Activated CD4-positive, alpha-beta T cell treated with anti-CD3 and anti-CD28 coated beads, Interleukin-2, amount 10 ng/mL, durations not matched to agents 7 days and 5 days (primary cell): ENCODE measurements at regions of chr9 and their contacts with region 1.

Region 1: GRCh38 chr9:97921959-97922724 is at the start of gene TRMO:
- DNase-seq: peak; percentile 98
- H3K4me3 Mint-ChIP-seq: peak within 1 kb of the TSS; percentile 96
- H3K27ac Mint-ChIP-seq: peak within 1 kb of the TSS; percentile 99
- H3K4me1 Mint-ChIP-seq: peaks cover 60% of the 10 kb centered on the region
- H3K27me3 Mint-ChIP-seq: peaks cover 2% of the 10 kb centered on the region
- total RNA-seq, gene TRMO: 26.6 to 31.8 TPM

Region 2: DNA sequence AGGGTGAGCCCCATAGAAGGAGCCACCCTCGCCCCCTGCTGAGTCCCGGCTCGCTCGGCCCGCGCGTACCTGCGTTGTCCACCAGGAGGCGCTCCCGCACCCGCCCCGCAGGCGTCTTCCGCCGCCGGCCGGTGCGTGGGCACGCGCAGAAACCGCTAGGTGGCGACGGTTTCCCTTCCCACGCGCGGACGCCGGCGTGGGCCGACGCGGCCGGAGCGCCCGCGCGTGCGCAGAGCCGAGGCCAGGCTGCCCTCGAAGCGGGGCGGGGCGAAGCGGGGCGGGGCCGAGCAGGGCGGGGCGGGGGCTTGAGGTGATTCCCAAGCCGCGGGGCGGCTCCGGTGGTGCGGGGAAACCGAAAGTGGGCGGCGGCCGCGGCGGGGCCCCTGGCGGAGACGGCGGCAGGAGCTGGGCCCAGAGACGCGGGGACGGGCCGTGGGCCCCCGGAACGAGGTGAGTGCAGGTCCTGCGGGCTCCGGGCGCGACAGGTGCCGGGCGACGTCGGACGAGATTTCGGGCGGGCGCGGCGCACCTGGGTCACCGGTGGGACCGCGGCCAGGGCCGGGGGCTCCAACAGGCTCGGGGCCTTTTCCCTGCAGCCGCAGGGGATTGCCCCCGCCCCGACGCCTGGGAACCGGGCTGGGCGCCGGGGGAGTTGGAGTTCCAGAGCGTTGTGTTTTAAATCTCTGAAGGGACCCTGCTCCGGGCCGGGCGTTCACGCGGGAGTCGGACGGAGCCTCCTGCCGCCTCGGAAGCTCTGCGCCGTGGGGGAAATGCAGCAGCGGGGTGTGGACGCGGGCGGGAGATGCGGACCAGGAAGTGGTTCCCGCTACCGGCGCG is 510.1 kb before region 1 on chr9 and contains the start of gene TDRD7:
- CTCF ChIA-PET with region 1: no interaction called
- POLR2A ChIA-PET with region 1: no interaction called
- DNase-seq: peak; percentile 87
- H3K4me3 Mint-ChIP-seq: peak within 1 kb of the TSS; percentile 85
- H3K27ac Mint-ChIP-seq: peak within 1 kb of the TSS; percentile 52
- H3K4me1 Mint-ChIP-seq: peaks cover 34% of the 10 kb centered on the region
- H3K27me3 Mint-ChIP-seq: peaks cover 35% of the 10 kb centered on the region
- total RNA-seq, gene TDRD7: 18.1 to 19.5 TPM

Region 3: GRCh38 chr9:97890038-97890437 is 32.1 kb before region 1 on chr9:
- CTCF ChIA-PET with region 1: interaction called, 11 read pairs
- POLR2A ChIA-PET with region 1: no interaction called
- DNase-seq: peak; percentile 75
- H3K4me3 Mint-ChIP-seq: no peak overlapping the region
- H3K27ac Mint-ChIP-seq: peak overlapping the region; percentile 79
- H3K4me1 Mint-ChIP-seq: peaks cover 9% of the 10 kb centered on the region
- H3K27me3 Mint-ChIP-seq: peaks cover 3% of the 10 kb centered on the region

Region 4: DNA sequence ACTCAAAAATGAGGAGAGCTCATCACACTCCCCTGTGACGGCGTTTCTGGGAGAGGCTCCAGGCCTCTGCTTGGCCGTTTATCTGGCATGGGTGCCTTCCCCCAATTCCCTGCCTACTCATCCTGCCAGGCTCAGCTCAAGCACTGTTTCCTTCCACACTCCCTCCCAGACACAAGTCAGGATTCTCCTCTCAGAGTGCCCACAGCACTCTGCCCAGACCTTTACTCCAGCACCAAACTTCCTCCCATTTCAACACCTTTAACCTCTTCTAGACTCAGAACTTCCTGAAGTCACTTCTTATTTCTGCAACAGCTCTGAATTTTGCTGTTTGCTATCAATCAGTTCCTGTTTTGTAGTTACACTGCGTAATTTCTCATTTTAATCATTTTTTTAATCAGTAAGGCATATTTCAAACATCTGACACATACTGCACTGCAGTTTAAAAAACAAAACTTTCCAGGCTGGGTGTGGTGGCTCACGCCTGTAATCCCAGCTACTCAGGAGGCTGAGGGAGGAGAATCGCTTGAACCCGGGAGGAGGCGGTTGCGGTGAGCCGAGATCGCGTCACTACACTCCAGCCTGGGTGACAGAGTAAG is 15.8 kb before region 1 on chr9:
- CTCF ChIA-PET with region 1: interaction called, 28 read pairs
- POLR2A ChIA-PET with region 1: interaction called, 4 read pairs
- DNase-seq: peak; percentile 47
- H3K4me3 Mint-ChIP-seq: peak overlapping the region; percentile 62
- H3K27ac Mint-ChIP-seq: peak overlapping the region; percentile 97
- H3K4me1 Mint-ChIP-seq: peaks cover 85% of the 10 kb centered on the region
- H3K27me3 Mint-ChIP-seq: no peaks in the 10 kb centered on the region

Region 5: GRCh38 chr9:97982683-97983588 is 60.8 kb after region 1 on chr9 and contains the start of gene ANP32B:
- CTCF ChIA-PET with region 1: interaction called, 39 read pairs
- POLR2A ChIA-PET with region 1: interaction called, 4 read pairs
- DNase-seq: peak; percentile 95
- H3K4me3 Mint-ChIP-seq: peak within 1 kb of the TSS; percentile 83
- H3K27ac Mint-ChIP-seq: peak within 1 kb of the TSS; percentile 95
- H3K4me1 Mint-ChIP-seq: peaks cover 49% of the 10 kb centered on the region
- H3K27me3 Mint-ChIP-seq: no peaks in the 10 kb centered on the region
- total RNA-seq, gene ANP32B: 358 to 453 TPM

Region 6: GRCh38 chr9:98255578-98256296 is 333.6 kb after region 1 on chr9 and contains the start of gene TBC1D2:
- CTCF ChIA-PET with region 1: interaction called, 12 read pairs
- POLR2A ChIA-PET with region 1: interaction called, 7 read pairs
- DNase-seq: peak; percentile 97
- H3K4me3 Mint-ChIP-seq: peak within 1 kb of the TSS; percentile 90
- H3K27ac Mint-ChIP-seq: peak within 1 kb of the TSS; percentile 98
- H3K4me1 Mint-ChIP-seq: peaks cover 33% of the 10 kb centered on the region
- H3K27me3 Mint-ChIP-seq: no peaks in the 10 kb centered on the region
- total RNA-seq, gene TBC1D2: 8.3 to 8.7 TPM